Common myeloid progenitor, CD34-positive (primary cell): ENCODE measurements at regions of chr2 and their contacts with region 1.

Region 1: DNA sequence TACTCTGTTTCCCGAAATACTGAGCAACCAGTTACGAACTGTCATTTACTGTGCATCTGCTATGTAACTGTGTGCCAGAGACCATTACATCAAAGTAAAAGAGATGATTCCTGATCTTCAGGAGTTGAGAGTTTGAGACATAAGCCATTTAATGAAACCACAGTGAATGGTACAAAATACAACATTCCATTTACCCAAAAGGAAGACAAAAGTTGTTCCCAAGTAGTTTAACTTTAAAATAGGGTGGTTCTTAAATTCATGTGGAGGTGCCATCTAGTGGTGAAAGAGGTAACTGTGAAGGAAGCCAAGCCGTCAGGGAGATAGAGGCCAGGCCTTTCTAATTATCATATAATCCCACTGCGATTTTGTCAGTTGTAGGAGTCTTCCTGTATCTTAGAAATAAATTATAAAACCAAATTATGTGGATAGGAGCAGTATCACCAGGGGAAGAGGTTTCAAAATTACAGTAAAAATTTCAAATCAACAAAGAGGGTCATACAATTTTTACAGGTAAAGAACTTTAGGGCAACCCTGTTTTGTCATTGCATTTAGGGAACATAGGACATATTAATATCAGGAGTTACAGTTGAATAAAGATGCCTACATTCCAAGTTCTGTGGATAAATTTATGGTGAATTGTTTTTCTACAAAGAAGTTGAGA is 67.7 kb downstream of the EPAS1 start:
- DNase-seq: peak; percentile 63 to 77 (median 70)
- H3K4me3 ChIP-seq: no peak overlapping the region
- H3K27ac ChIP-seq: no peak overlapping the region
- H3K4me1 ChIP-seq: peaks cover 7 to 59% (median 33%) of the 10 kb centered on the region in 4 experiments
- H3K27me3 ChIP-seq: no peaks in the 10 kb centered on the region

Region 2: GRCh38 chr2:46062637-46063412 is 302.1 kb before region 1 on chr2:
- CTCF ChIA-PET with region 1: interaction called, 17 read pairs
- POLR2A ChIA-PET with region 1: no interaction called
- DNase-seq: peak; percentile 78 to 89 (median 84)
- H3K4me3 ChIP-seq: no peak overlapping the region
- H3K27ac ChIP-seq: no peak overlapping the region
- H3K4me1 ChIP-seq: no peaks in the 10 kb centered on the region
- H3K27me3 ChIP-seq: no peaks in the 10 kb centered on the region

Region 3: GRCh38 chr2:46230115-46230571 is 134.8 kb before region 1 on chr2:
- CTCF ChIA-PET with region 1: interaction called, 32 read pairs
- POLR2A ChIA-PET with region 1: no interaction called
- DNase-seq: peak; percentile 27 to 73 (median 68)
- H3K4me3 ChIP-seq: no peak overlapping the region
- H3K27ac ChIP-seq: no peak overlapping the region
- H3K4me1 ChIP-seq: peaks cover 0 to 20% (median 12%) of the 10 kb centered on the region in 4 experiments
- H3K27me3 ChIP-seq: no peaks in the 10 kb centered on the region

Region 4: DNA sequence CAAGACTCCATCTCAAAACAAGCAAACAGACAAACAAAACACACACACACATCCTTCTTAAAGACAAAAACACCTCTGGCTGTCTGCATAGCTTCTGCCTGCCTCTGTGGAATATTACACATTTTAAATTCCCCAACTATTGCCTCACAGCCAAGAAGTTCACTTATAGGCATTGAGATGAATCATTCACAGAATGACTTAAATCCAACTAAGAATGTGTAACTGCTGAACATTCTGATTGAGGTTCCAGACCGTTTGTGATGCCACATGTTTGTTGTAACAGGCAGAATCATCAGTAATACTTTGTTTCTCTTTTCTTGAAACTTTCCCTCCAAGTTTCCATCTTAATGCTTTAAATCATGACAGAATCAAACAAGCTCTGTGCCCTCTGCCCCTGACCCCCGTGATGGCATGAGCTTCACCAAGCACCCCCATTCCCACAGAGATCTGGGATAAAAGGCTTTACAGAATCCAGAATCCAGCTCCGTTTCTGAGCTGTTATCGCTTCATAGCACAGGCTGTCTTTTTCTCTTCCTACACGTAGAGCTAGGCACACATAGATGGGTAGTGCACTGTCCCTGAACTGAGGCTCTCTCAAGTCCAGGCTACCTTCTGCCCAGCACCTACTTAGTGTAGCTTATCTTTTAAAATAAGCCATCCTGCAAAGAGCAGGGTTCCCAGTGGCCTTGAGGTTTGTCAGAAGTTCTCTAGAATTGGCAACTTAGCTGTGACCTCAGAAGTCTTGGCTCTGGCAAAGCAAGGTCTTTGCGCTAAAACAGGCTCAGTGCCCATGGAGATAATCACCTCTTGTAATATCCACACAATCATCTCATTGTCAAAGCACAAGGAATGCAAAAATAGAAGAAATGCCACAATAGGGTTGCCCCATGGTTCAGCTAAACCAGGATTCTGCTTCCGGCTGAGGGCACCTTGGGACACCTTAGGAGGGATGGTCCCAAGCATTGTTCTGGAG is 34.8 kb before region 1 on chr2:
- CTCF ChIA-PET with region 1: interaction called, 10 read pairs
- POLR2A ChIA-PET with region 1: interaction called, 3 read pairs
- DNase-seq: no peak
- H3K4me3 ChIP-seq: no peak overlapping the region
- H3K27ac ChIP-seq: no peak overlapping the region
- H3K4me1 ChIP-seq: peaks cover 0 to 24% (median 7%) of the 10 kb centered on the region in 4 experiments
- H3K27me3 ChIP-seq: peaks cover 0 to 2% (median 0%) of the 10 kb centered on the region in 5 experiments

Region 5: GRCh38 chr2:46339667-46340459 is 25.1 kb before region 1 on chr2:
- CTCF ChIA-PET with region 1: interaction called, 13 read pairs
- POLR2A ChIA-PET with region 1: interaction called, 3 read pairs
- DNase-seq: peak in 1 of 3 donors; percentile 22
- H3K4me3 ChIP-seq: no peak overlapping the region
- H3K27ac ChIP-seq: no peak overlapping the region
- H3K4me1 ChIP-seq: peaks cover 0 to 12% (median 3%) of the 10 kb centered on the region in 4 experiments
- H3K27me3 ChIP-seq: no peaks in the 10 kb centered on the region

Region 6: DNA sequence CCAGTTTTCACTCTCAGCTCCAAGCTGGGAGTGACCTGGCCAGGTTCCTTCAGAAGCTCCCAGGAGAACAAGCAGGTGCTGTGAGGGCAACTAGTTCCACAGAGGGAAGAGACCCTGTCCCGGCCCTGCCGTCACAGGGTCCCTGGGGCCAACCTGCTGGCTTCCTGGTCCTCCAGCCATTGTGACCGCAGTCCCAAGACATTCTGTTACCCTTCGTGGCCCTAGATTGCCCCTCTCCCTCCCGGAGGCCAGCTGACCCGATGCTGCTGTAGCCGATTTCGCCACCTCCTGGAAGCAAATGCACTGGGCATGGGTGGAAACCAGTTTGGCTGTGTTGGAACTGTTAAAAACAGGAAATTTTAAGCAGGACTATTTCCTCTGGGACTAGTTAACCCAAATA is 12.3 kb before region 1 on chr2:
- CTCF ChIA-PET with region 1: interaction called, 10 read pairs
- POLR2A ChIA-PET with region 1: no interaction called
- DNase-seq: no peak
- H3K4me3 ChIP-seq: no peak overlapping the region
- H3K27ac ChIP-seq: no peak overlapping the region
- H3K4me1 ChIP-seq: peaks cover 19 to 51% (median 39%) of the 10 kb centered on the region in 4 experiments
- H3K27me3 ChIP-seq: no peaks in the 10 kb centered on the region

Region 7: GRCh38 chr2:46377176-46377581 is 12.3 kb after region 1 on chr2:
- CTCF ChIA-PET with region 1: interaction called, 19 read pairs
- POLR2A ChIA-PET with region 1: no interaction called
- DNase-seq: no peak
- H3K4me3 ChIP-seq: no peak overlapping the region
- H3K27ac ChIP-seq: no peak overlapping the region
- H3K4me1 ChIP-seq: peaks cover 0 to 5% (median 0%) of the 10 kb centered on the region in 4 experiments
- H3K27me3 ChIP-seq: no peaks in the 10 kb centered on the region